ENCODE measurements at regions of chr3 and their contacts with region 1.

Region 1: DNA sequence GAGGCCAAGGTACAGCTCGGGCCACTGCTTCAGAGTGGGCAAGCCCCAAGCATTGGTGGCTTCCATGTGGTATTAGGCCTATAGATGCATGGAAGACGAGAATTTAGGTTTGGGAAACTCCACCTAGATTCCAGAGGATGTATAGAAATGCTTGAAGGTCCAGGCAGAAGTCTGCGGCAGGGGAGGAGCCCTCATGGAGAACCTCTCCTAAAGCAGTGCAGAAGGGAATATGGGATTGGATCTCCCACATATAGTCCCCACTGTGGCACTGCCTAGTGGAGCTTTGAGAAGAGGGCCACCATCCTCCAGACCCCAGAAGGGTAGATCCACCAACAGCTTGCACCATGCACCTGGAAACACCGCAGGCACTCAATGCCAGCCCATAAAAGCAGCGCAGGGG is 48.1 kb upstream of the XXYLT1 start:
- DNase-seq: no peak

Region 2: DNA sequence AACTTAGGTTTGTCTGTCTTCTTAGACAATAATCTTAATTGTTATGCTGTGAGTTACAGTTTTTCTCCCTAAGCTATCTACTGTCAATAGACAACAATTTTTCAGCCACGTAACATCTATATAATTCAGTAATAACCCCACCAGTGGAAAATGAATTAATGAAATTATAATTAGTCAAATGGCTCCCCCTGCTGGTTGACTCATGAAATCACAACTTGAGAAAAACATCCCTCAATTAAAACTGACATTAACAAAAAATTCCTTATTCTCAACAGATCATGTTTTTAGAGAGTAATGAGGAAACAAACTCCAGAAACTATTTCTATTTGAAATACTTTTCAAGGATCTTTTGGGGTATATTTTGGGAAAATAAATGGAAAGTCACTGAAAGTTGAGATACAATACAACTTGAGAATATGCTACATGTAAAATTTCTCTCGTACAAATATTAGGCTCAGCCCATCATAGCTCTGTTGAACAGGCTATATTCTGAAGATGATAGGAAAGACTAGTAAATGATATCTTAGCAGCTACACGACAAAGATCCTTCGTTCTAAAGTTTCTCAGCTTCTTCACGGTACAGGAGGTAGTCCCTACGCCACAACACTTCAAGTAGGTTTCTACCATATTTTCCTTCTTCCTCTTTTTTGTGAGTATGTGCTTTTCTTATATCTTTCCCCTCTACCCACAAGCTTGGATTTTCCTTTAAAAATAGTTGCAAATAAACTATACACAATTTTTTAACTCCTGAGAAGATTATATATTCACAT is 203.4 kb after region 1 on chr3:
- in situ Hi-C with region 1: loop called (anchors 25 kb)
- DNase-seq: no peak